MCF 10A (cell line): ENCODE measurements at regions of chr12 and their contacts with region 1.

Region 1: GRCh38 chr12:15629108-15629507 is 160.1 kb downstream of the EPS8 start:
- DNase-seq: peak; percentile 87
- H3K4me3 Mint-ChIP-seq: peak overlapping the region; percentile 48
- H3K27ac Mint-ChIP-seq: peak overlapping the region; percentile 97
- H3K4me1 Mint-ChIP-seq: peaks cover 48% of the 10 kb centered on the region
- H3K27me3 Mint-ChIP-seq: no peaks in the 10 kb centered on the region
- CTCF ChIP-seq: no peak

Region 2: DNA sequence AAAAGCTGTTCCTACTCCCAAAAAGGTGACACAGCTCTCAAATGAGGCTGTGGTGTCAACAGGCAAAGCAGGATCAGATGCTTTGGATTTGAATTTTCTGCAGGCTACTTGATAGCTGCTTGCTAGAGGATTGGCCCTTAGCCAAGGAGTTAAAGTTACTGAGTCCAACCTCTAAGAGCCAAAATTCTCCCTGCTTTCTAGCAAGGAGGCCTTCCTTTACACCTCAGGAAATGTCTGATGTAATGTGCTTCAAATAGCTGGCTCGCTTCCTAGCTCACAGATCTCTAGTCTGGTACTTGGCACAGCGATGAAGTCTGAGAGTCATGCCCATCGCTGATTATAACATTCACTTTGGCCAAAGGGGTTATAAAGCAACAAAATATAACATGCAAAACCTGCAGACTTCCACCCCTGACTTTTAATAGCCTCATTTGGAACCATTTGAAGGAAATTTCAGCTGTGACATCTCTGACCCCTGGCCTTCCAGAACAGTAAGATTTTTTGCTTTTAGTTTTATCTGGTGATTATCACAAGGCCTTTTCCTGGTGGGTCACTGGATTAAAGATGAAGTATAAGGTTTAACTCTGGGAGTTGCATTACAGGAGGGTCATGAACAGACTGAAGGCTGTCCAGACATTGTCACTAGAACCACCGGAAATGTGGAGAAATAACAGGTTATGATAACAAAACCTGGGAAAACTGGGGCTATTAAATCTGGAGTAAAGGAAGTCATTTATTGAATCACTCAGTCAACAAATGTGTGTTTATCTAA is 29.7 kb before region 1 on chr12:
- CTCF ChIA-PET with region 1: interaction called, 3 read pairs
- POLR2A ChIA-PET with region 1: interaction called, 5 read pairs
- intact Hi-C with region 1: loop called (anchors 2 kb)
- DNase-seq: peak; percentile 96
- H3K4me3 Mint-ChIP-seq: no peak overlapping the region
- H3K27ac Mint-ChIP-seq: peak overlapping the region; percentile 11
- H3K4me1 Mint-ChIP-seq: peaks cover 28% of the 10 kb centered on the region
- H3K27me3 Mint-ChIP-seq: no peaks in the 10 kb centered on the region
- CTCF ChIP-seq: no peak

Region 3: GRCh38 chr12:15861404-15861803 is 232.3 kb after region 1 on chr12:
- CTCF ChIA-PET with region 1: no interaction called
- POLR2A ChIA-PET with region 1: no interaction called
- intact Hi-C with region 1: no loop called
- DNase-seq: no peak
- H3K4me3 Mint-ChIP-seq: no peak overlapping the region
- H3K27ac Mint-ChIP-seq: no peak overlapping the region
- H3K4me1 Mint-ChIP-seq: no peaks in the 10 kb centered on the region
- H3K27me3 Mint-ChIP-seq: no peaks in the 10 kb centered on the region
- CTCF ChIP-seq: no peak